Naive thymus-derived CD4-positive, alpha-beta T cell (primary cell): ENCODE measurements at regions of chr7 and their contacts with region 1.

Region 1: DNA sequence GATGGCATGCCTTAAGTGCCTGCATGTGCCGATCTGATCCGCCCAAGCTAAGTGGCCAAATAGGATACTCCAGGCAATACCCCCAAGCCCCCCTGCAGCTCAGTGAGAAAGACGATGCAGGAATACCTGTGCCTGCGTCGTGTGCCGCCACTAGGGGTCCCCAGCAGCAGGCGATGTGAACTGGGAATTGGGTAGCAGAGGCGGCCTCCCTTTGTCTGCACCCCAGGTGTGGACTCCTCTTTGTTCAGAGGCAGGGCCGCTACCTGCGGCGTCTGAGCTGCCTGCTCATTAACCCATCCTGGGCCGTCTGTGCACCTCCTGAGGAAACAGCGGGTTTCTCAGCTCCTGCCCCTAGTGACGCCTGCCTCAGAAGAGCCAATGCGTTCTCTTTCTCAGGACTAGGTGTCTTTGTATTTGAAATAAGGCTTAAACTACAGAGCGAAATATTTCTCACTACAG is 4.8 kb upstream of the CHN2 start:
- DNase-seq: peak in 7 of 9 donors; percentile 9 to 50 (median 23)
- ATAC-seq: peak; percentile 71
- H3K4me3 ChIP-seq: no peak overlapping the region
- H3K4me3 Mint-ChIP-seq: no peak overlapping the region
- H3K27ac ChIP-seq: no peak overlapping the region
- H3K27ac Mint-ChIP-seq: no peak overlapping the region
- H3K4me1 ChIP-seq: no peaks in the 10 kb centered on the region
- H3K4me1 Mint-ChIP-seq: peaks cover 0 to 13% (median 0%) of the 10 kb centered on the region in 7 donors
- H3K27me3 ChIP-seq: no peaks in the 10 kb centered on the region
- H3K27me3 Mint-ChIP-seq: peaks cover 25 to 58% (median 53%) of the 10 kb centered on the region in 5 donors

Region 2: GRCh38 chr7:28921822-28922221 is 267.9 kb before region 1 on chr7:
- CTCF ChIA-PET with region 1: no interaction called
- POLR2A ChIA-PET with region 1: no interaction called
- intact Hi-C with region 1: loop called (anchors 5 to 10 kb)
- DNase-seq: peak in 7 of 9 donors; percentile 17 to 56 (median 39)
- ATAC-seq: peak; percentile 88
- H3K4me3 ChIP-seq: no peak overlapping the region
- H3K4me3 Mint-ChIP-seq: peak overlapping the region in 1 of 10 donors; percentile 16
- H3K27ac ChIP-seq: no peak overlapping the region
- H3K27ac Mint-ChIP-seq: no peak overlapping the region
- H3K4me1 ChIP-seq: peaks cover 0 to 8% of the 10 kb centered on the region in 2 donors
- H3K4me1 Mint-ChIP-seq: peaks cover 0 to 23% (median 14%) of the 10 kb centered on the region in 7 donors
- H3K27me3 ChIP-seq: no peaks in the 10 kb centered on the region
- H3K27me3 Mint-ChIP-seq: peaks cover 0 to 22% (median 0%) of the 10 kb centered on the region in 5 donors

Region 3: GRCh38 chr7:28926871-28927597 is 262.7 kb before region 1 on chr7:
- CTCF ChIA-PET with region 1: no interaction called
- POLR2A ChIA-PET with region 1: no interaction called
- intact Hi-C with region 1: loop called (anchors 5 to 10 kb)
- DNase-seq: peak; percentile 16 to 72 (median 60)
- ATAC-seq: peak; percentile 93
- H3K4me3 ChIP-seq: peak overlapping the region; percentile 57
- H3K4me3 Mint-ChIP-seq: peak overlapping the region; percentile 79 to 97 (median 90)
- H3K27ac ChIP-seq: no peak overlapping the region
- H3K27ac Mint-ChIP-seq: peak overlapping the region in 8 of 9 donors; percentile 9 to 92 (median 53)
- H3K4me1 ChIP-seq: peaks cover 4 to 12% of the 10 kb centered on the region in 2 donors
- H3K4me1 Mint-ChIP-seq: peaks cover 0 to 36% (median 23%) of the 10 kb centered on the region in 7 donors
- H3K27me3 ChIP-seq: no peaks in the 10 kb centered on the region
- H3K27me3 Mint-ChIP-seq: peaks cover 3 to 29% (median 7%) of the 10 kb centered on the region in 5 donors

Region 4: GRCh38 chr7:29255906-29256782 is 66.4 kb after region 1 on chr7:
- CTCF ChIA-PET with region 1: no interaction called
- POLR2A ChIA-PET with region 1: no interaction called
- intact Hi-C with region 1: no loop called
- DNase-seq: no peak
- ATAC-seq: peak; percentile 34
- H3K4me3 ChIP-seq: no peak overlapping the region
- H3K4me3 Mint-ChIP-seq: no peak overlapping the region
- H3K27ac ChIP-seq: no peak overlapping the region
- H3K27ac Mint-ChIP-seq: no peak overlapping the region
- H3K4me1 ChIP-seq: no peaks in the 10 kb centered on the region
- H3K4me1 Mint-ChIP-seq: peaks cover 0 to 3% (median 0%) of the 10 kb centered on the region in 7 donors
- H3K27me3 ChIP-seq: no peaks in the 10 kb centered on the region
- H3K27me3 Mint-ChIP-seq: peaks cover 0 to 16% (median 0%) of the 10 kb centered on the region in 5 donors

Region 5: GRCh38 chr7:29337546-29338116 is 147.9 kb after region 1 on chr7:
- CTCF ChIA-PET with region 1: no interaction called
- POLR2A ChIA-PET with region 1: no interaction called
- intact Hi-C with region 1: loop called (anchors 2 to 10 kb)
- DNase-seq: peak in 6 of 9 donors; percentile 24 to 68 (median 45)
- ATAC-seq: peak; percentile 90
- H3K4me3 ChIP-seq: no peak overlapping the region
- H3K4me3 Mint-ChIP-seq: peak overlapping the region; percentile 5 to 73 (median 50)
- H3K27ac ChIP-seq: no peak overlapping the region
- H3K27ac Mint-ChIP-seq: peak overlapping the region in 8 of 9 donors; percentile 11 to 83 (median 68)
- H3K4me1 ChIP-seq: peaks cover 15 to 24% of the 10 kb centered on the region in 2 donors
- H3K4me1 Mint-ChIP-seq: peaks cover 12 to 28% (median 22%) of the 10 kb centered on the region in 7 donors
- H3K27me3 ChIP-seq: no peaks in the 10 kb centered on the region
- H3K27me3 Mint-ChIP-seq: peaks cover 0 to 6% (median 0%) of the 10 kb centered on the region in 5 donors

Region 6: DNA sequence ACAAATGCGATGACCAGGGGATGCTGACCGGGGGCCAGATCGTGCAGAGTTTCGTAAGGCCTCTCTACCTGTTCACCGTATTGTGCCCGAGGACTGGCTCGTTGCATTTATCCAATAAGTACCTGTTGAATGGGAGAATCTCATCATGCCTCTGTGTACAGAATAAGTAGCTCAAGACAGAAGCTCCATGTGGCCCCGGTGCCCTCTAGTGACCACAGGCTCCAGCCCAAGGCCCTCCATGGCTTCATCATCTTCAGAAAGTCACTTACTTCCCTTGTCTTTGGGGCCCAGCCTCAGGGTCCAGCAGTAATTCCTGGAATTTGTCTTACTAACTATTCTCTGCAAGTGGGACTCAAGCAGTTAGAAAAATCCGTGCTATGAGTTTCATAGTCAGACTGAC is 155.8 kb after region 1 on chr7:
- CTCF ChIA-PET with region 1: no interaction called
- POLR2A ChIA-PET with region 1: no interaction called
- intact Hi-C with region 1: loop called in 1 of 2 experiments (anchors 1 kb)
- DNase-seq: no peak
- ATAC-seq: peak; percentile 46
- H3K4me3 ChIP-seq: no peak overlapping the region
- H3K4me3 Mint-ChIP-seq: no peak overlapping the region
- H3K27ac ChIP-seq: no peak overlapping the region
- H3K27ac Mint-ChIP-seq: no peak overlapping the region
- H3K4me1 ChIP-seq: no peaks in the 10 kb centered on the region
- H3K4me1 Mint-ChIP-seq: no peaks in the 10 kb centered on the region
- H3K27me3 ChIP-seq: no peaks in the 10 kb centered on the region
- H3K27me3 Mint-ChIP-seq: peaks cover 0 to 6% (median 5%) of the 10 kb centered on the region in 5 donors

Region 7: GRCh38 chr7:29588900-29589696 is 399.3 kb after region 1 on chr7:
- CTCF ChIA-PET with region 1: no interaction called
- POLR2A ChIA-PET with region 1: no interaction called
- intact Hi-C with region 1: no loop called
- DNase-seq: peak in 4 of 9 donors; percentile 6 to 23 (median 17)
- ATAC-seq: peak; percentile 75
- H3K4me3 ChIP-seq: no peak overlapping the region
- H3K4me3 Mint-ChIP-seq: peak overlapping the region in 7 of 10 donors; percentile 5 to 68 (median 43)
- H3K27ac ChIP-seq: no peak overlapping the region
- H3K27ac Mint-ChIP-seq: no peak overlapping the region
- H3K4me1 ChIP-seq: no peaks in the 10 kb centered on the region
- H3K4me1 Mint-ChIP-seq: peaks cover 0 to 9% (median 3%) of the 10 kb centered on the region in 7 donors
- H3K27me3 ChIP-seq: no peaks in the 10 kb centered on the region
- H3K27me3 Mint-ChIP-seq: peaks cover 0 to 13% (median 11%) of the 10 kb centered on the region in 5 donors